ENCODE measurements at regions of chr10 and their contacts with region 1.

Region 1: DNA sequence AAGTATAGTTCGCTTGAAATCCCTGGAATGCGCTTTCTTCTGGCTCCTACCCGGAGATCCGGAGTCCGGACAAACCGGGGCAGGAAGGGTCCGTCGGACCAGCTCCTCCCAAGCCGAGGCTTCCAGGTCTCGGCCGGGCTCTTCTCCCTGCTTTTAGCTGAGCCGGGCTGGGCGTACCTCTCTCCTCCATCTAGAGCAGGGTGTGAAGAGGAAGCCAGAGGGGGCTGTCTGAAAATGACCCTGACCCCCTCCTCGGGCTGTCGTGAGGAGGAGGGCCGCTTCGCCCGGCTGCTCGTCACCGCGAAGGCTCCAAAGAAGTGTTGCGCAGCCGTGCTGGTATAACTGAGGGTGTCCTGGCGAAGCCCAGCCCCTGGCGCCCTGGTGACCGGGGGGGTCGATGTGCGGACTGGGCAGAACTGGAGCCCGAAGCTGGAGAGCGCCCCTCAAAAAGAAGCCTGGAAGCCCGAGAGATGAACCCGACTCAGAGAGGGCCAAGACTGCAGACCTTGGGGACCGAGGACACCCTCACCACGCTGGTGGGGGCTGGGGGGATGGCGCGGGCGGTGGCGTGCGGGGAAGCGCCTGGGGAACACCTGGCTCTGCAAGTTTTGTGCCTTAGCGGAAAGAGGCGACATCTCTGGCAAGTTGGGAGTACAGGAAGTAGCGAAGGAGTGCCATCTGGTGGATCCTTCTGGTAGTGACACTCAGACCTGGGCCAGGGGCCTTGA is 5.7 kb downstream of the KAZALD1 start:
- DNase-seq: peak; percentile 89
- H3K4me3 ChIP-seq: peak overlapping the region; percentile 71
- H3K27ac ChIP-seq: peak overlapping the region; percentile 25
- H3K4me1 ChIP-seq: peaks cover 74% of the 10 kb centered on the region
- CTCF ChIP-seq: peak; percentile 87

Region 2: GRCh38 chr10:101050208-101051069 is 17.1 kb before region 1 on chr10:
- CTCF ChIA-PET with region 1: interaction called, 5 read pairs
- POLR2A ChIA-PET with region 1: interaction called, 5 read pairs
- intact Hi-C with region 1: loop called (anchors 2 kb)
- DNase-seq: peak; percentile 83
- H3K4me3 ChIP-seq: peak overlapping the region; percentile 50
- H3K27ac ChIP-seq: peak overlapping the region; percentile 44
- H3K4me1 ChIP-seq: peaks cover 42% of the 10 kb centered on the region
- CTCF ChIP-seq: peak; percentile 96

Region 3: DNA sequence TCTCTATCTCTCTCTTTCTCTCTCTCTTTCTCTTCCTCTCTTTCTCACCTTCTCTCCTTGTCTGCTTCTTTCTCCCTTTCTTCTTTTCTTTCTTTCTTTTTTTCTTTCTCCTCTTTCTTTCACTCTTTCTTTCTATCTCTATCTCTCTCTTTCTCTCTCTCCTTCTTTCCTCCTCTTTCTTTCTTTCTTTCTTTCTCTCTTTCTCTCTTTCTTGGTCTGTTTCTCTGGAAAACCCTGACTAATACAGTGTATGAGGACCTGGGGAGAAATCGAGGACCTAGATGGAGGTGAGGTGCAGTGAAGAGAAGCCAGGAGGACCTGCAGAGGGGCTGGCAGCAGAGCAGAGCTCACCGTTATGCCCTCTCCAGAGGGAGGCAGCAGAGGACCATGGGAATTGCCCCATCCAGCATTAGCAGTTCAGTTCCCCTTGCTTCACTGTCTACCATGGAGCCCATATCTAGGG is 233.8 kb after region 1 on chr10:
- CTCF ChIA-PET with region 1: no interaction called
- POLR2A ChIA-PET with region 1: no interaction called
- intact Hi-C with region 1: no loop called
- DNase-seq: peak; percentile 50
- H3K4me3 ChIP-seq: no peak overlapping the region
- H3K27ac ChIP-seq: no peak overlapping the region
- H3K4me1 ChIP-seq: no peaks in the 10 kb centered on the region
- CTCF ChIP-seq: peak; percentile 72